ENCODE measurements at regions of chr1 and their contacts with region 1.

Region 1: GRCh38 chr1:178542560-178543356 is 29.8 kb downstream of the TEX35 start:
- DNase-seq: peak; percentile 94
- ATAC-seq: peak; percentile 97
- H3K4me3 ChIP-seq: peak overlapping the region; percentile 94
- H3K27ac ChIP-seq: peak overlapping the region; percentile 77
- H3K4me1 ChIP-seq: peaks cover 5% of the 10 kb centered on the region
- H3K27me3 ChIP-seq: no peaks in the 10 kb centered on the region
- CTCF ChIP-seq: peak; percentile 99

Region 2: GRCh38 chr1:178749581-178750166 is 206.9 kb after region 1 on chr1:
- intact Hi-C with region 1: loop called (anchors 5 kb)
- DNase-seq: no peak
- ATAC-seq: no peak
- H3K4me3 ChIP-seq: no peak overlapping the region
- H3K27ac ChIP-seq: no peak overlapping the region
- H3K4me1 ChIP-seq: peaks cover 7% of the 10 kb centered on the region
- H3K27me3 ChIP-seq: no peaks in the 10 kb centered on the region
- CTCF ChIP-seq: no peak

Region 3: DNA sequence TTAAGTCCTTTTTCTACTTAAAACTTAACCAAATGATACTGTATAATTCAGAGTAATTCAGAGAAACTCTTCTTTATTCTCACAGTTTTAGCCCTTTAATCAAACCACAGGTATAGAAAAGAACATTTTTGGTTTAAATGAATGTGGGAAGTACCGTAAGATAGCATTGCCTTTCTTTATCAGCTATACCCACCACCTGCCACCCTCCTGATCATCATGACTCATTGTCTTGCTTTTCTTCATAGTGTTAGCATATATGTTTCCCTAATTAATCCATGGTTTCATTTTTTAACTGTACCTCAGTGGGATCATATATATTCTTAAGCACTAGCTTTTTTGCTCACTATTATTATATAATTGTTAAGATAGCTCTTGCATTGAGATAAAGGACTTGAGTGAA is 355.6 kb after region 1 on chr1:
- intact Hi-C with region 1: no loop called
- DNase-seq: no peak
- ATAC-seq: no peak
- H3K4me3 ChIP-seq: no peak overlapping the region
- H3K27ac ChIP-seq: no peak overlapping the region
- H3K4me1 ChIP-seq: no peaks in the 10 kb centered on the region
- H3K27me3 ChIP-seq: no peaks in the 10 kb centered on the region
- CTCF ChIP-seq: no peak

Region 4: GRCh38 chr1:179002552-179003345 is 460.0 kb after region 1 on chr1:
- intact Hi-C with region 1: loop called (anchors 10 kb)
- DNase-seq: peak; percentile 78
- ATAC-seq: peak; percentile 90
- H3K4me3 ChIP-seq: no peak overlapping the region
- H3K27ac ChIP-seq: no peak overlapping the region
- H3K4me1 ChIP-seq: peaks cover 5% of the 10 kb centered on the region
- H3K27me3 ChIP-seq: no peaks in the 10 kb centered on the region
- CTCF ChIP-seq: peak; percentile 97